Activated CD4-positive, alpha-beta memory T cell treated with anti-CD3 and anti-CD28 coated beads, Interleukin-2, amount 10 ng/mL, durations not matched to agents 7 days and 5 days (primary cell): ENCODE measurements at regions of chr7 and their contacts with region 1.

Region 1: GRCh38 chr7:2709553-2710285 is 21.7 kb downstream of the AMZ1 start:
- DNase-seq: peak; percentile 88
- H3K4me3 Mint-ChIP-seq: peak overlapping the region; percentile 69
- H3K27ac Mint-ChIP-seq: peak overlapping the region; percentile 81
- H3K4me1 Mint-ChIP-seq: peaks cover 38% of the 10 kb centered on the region
- H3K27me3 Mint-ChIP-seq: peaks cover 5% of the 10 kb centered on the region

Region 2: GRCh38 chr7:2451171-2452073 is 258.3 kb before region 1 on chr7:
- CTCF ChIA-PET with region 1: interaction called, 26 read pairs
- POLR2A ChIA-PET with region 1: no interaction called
- DNase-seq: peak; percentile 77
- H3K4me3 Mint-ChIP-seq: no peak overlapping the region
- H3K27ac Mint-ChIP-seq: no peak overlapping the region
- H3K4me1 Mint-ChIP-seq: peaks cover 7% of the 10 kb centered on the region
- H3K27me3 Mint-ChIP-seq: peaks cover 5% of the 10 kb centered on the region

Region 3: GRCh38 chr7:2660585-2661408 is 48.9 kb before region 1 on chr7:
- CTCF ChIA-PET with region 1: interaction called, 11 read pairs
- POLR2A ChIA-PET with region 1: no interaction called
- DNase-seq: no peak
- H3K4me3 Mint-ChIP-seq: no peak overlapping the region
- H3K27ac Mint-ChIP-seq: no peak overlapping the region
- H3K4me1 Mint-ChIP-seq: no peaks in the 10 kb centered on the region
- H3K27me3 Mint-ChIP-seq: no peaks in the 10 kb centered on the region

Region 4: GRCh38 chr7:2680792-2681490 is 28.8 kb before region 1 on chr7:
- CTCF ChIA-PET with region 1: interaction called, 53 read pairs
- POLR2A ChIA-PET with region 1: no interaction called
- DNase-seq: peak; percentile 67
- H3K4me3 Mint-ChIP-seq: no peak overlapping the region
- H3K27ac Mint-ChIP-seq: no peak overlapping the region
- H3K4me1 Mint-ChIP-seq: no peaks in the 10 kb centered on the region
- H3K27me3 Mint-ChIP-seq: peaks cover 12% of the 10 kb centered on the region

Region 5: DNA sequence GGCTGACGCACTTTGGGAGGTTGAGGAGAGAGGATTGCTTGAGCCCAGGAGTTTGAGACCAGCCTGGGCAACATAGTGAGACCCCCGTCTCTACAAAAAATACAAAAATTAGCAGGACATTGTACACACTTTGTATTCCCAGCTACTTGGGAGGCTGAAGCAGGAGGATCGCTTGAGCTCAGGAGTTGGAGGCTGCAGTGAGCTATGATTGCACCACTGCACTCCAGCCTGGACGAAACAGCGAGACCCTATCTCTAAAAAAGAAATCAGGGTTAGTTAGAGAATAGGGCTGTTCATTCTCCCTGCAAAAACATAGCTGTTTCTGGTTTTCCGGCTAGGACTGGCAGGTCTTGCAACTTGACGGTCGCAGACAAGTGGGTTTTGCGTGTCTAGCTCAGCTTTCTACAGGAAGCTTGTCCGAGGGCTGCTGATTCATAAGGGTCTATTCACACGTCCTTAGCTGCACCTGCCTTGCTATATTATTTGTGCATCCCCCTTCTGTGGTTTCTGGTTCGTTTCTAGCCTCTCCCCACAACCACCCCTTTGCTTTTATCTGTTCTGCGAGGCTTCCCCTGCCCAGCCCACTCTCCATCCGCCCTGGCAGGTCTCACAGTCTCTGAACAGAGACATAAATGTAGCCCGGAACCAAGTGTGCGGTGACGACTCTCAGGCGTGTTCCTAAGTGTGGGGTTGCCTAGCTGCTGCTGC is 11.0 kb before region 1 on chr7:
- CTCF ChIA-PET with region 1: interaction called, 98 read pairs
- POLR2A ChIA-PET with region 1: interaction called, 62 read pairs
- DNase-seq: peak; percentile 84
- H3K4me3 Mint-ChIP-seq: peak overlapping the region; percentile 50
- H3K27ac Mint-ChIP-seq: peak overlapping the region; percentile 75
- H3K4me1 Mint-ChIP-seq: peaks cover 30% of the 10 kb centered on the region
- H3K27me3 Mint-ChIP-seq: peaks cover 9% of the 10 kb centered on the region

Region 6: GRCh38 chr7:2757904-2758672 is 48.4 kb after region 1 on chr7:
- CTCF ChIA-PET with region 1: interaction called, 21 read pairs
- POLR2A ChIA-PET with region 1: interaction called, 15 read pairs
- DNase-seq: peak; percentile 79
- H3K4me3 Mint-ChIP-seq: peak overlapping the region; percentile 31
- H3K27ac Mint-ChIP-seq: peak overlapping the region; percentile 87
- H3K4me1 Mint-ChIP-seq: peaks cover 41% of the 10 kb centered on the region
- H3K27me3 Mint-ChIP-seq: no peaks in the 10 kb centered on the region